Posterior vena cava (tissue), 2 donors: ENCODE measurements at regions of chr4 and their contacts with region 1.

Region 1: GRCh38 chr4:77188498-77189220 is 31.7 kb downstream of the CCNG2 start:
- DNase-seq: no peak

Region 2: GRCh38 chr4:77209936-77210335 is 21.3 kb after region 1 on chr4:
- intact Hi-C with region 1: loop called in 1 of 2 experiments (anchors 1 kb)
- DNase-seq: no peak

Region 3: DNA sequence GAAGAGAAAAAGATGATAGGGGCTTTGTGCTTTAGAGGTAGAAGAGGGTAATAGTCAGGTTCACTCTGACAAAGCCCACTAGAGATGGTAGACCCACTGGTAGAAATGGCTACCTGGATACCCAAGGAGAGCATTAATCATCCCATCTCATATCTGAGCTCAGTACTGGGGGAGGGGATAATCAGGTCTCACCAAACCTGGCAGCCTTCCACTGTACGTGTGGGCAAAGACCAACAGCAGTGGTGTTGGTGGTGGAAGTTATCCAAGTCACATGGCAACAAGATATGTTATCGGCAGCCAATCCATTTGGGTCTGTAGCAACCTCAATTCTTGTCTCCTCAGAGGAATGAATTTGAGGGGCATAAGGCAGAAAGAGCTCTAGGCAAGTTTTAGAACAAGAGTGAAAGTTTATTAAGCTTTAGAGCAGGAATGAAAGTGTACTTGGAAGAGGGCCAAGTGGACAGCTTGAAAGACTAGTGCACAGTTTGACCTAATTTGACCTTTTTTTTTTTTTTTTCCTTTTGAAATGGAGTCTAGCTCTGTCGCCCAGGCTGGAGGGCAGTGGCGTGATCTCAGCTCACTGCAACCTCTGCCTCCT is 350.0 kb after region 1 on chr4:
- intact Hi-C with region 1: no loop called
- DNase-seq: no peak